Dendritic cell treated with granulocyte-macrophage colony-stimulating factor and Interleukin-4, amounts not matched to agents 40 ng/mL and 50 ng/mL, for 4 days (primary cell): ENCODE measurements at regions of chr6 and their contacts with region 1.

Region 1: GRCh38 chr6:105832361-105832761 is 253.8 kb upstream of the PRDM1 start:
- H3K4me3 Mint-ChIP-seq: peak overlapping the region; percentile 44
- H3K27ac Mint-ChIP-seq: peak overlapping the region; percentile 88
- H3K4me1 Mint-ChIP-seq: peaks cover 36% of the 10 kb centered on the region
- H3K27me3 Mint-ChIP-seq: no peaks in the 10 kb centered on the region

Region 2: DNA sequence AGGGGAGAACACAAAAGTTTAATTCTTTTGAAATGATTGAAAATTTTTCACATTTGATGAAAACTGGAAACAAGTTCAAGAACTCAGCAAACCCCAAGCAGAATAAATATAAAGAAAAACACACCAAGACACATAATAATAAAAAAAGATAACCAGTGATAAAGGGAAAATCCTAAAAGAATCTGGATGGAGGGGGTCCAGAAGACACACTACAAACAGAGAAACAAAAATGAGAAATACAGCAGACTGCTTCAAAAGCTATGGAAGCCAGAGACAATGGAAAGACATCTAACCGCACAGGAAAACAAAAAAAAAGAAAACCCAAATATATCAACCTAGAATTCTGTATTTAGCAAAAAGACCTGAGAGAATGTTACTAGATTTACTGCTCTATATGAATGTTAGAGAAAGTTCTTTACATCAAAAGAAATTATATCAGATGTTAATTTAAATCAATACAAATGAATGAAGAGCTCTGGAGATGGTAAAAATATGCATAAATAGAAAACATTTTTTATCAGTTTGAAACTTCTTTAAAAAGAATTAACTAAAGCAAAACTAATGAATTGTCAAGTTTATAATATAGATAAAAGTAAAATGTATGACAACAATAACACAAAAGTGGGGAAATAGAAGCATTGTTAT is 118.8 kb before region 1 on chr6:
- intact Hi-C with region 1: no loop called
- H3K4me3 Mint-ChIP-seq: no peak overlapping the region
- H3K27ac Mint-ChIP-seq: no peak overlapping the region
- H3K4me1 Mint-ChIP-seq: no peaks in the 10 kb centered on the region
- H3K27me3 Mint-ChIP-seq: no peaks in the 10 kb centered on the region

Region 3: GRCh38 chr6:105804436-105804835 is 27.9 kb before region 1 on chr6:
- intact Hi-C with region 1: no loop called
- H3K4me3 Mint-ChIP-seq: no peak overlapping the region
- H3K27ac Mint-ChIP-seq: no peak overlapping the region
- H3K4me1 Mint-ChIP-seq: peaks cover 31% of the 10 kb centered on the region
- H3K27me3 Mint-ChIP-seq: no peaks in the 10 kb centered on the region

Region 4: DNA sequence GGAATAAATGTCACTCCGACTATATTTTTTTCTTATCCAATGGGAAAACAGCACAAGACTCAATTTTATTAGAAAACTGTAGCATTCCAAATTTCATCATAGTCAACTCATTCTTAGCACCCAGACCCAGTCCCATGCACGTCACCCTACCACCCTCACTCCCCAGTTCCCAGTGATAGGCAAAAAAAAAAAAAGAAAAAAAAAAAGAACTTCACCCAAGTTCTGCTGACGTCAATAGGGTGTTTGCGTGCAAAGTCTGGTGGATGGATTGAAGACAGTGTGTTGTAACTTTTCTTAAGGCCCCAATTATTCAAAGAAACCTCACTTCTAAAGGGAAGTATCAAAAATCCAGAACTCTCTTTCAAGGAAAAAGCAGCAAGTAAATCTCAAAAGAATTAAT is 39.9 kb after region 1 on chr6:
- intact Hi-C with region 1: loop called (anchors 5 kb)
- H3K4me3 Mint-ChIP-seq: no peak overlapping the region
- H3K27ac Mint-ChIP-seq: peak overlapping the region; percentile 72
- H3K4me1 Mint-ChIP-seq: peaks cover 77% of the 10 kb centered on the region
- H3K27me3 Mint-ChIP-seq: peaks cover 3% of the 10 kb centered on the region

Region 5: GRCh38 chr6:106620931-106621672 is 788.7 kb after region 1 on chr6:
- intact Hi-C with region 1: no loop called
- H3K4me3 Mint-ChIP-seq: no peak overlapping the region
- H3K27ac Mint-ChIP-seq: no peak overlapping the region
- H3K4me1 Mint-ChIP-seq: no peaks in the 10 kb centered on the region
- H3K27me3 Mint-ChIP-seq: no peaks in the 10 kb centered on the region